Left cardiac atrium (tissue), 4 donors: ENCODE measurements at regions of chr5 and their contacts with region 1.

Region 1: GRCh38 chr5:67149951-67150523 is 46.6 kb downstream of the CD180 start:
- DNase-seq: no peak
- ATAC-seq: no peak

Region 2: DNA sequence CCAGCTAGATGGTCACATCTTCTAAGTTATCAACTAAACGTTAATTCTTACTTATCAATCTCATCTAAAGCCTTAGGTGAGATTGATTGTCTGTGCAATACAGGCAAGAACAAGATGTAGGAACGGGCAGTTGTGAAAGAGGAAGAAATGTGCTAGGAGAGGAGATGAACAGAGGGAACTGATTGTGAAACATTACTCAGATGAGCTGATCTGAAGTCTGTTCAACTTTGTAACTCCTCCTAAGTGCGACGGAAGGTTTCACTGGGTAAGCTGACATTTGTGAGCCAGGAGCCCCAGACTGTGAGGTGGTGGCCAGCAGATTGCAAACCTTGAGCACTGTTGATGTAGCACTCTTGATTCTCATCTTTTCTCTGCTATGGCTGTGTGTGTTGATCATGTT is 157.5 kb before region 1 on chr5:
- intact Hi-C with region 1: loop called in 1 of 2 experiments (anchors 5 kb)
- DNase-seq: no peak
- ATAC-seq: no peak

Region 3: GRCh38 chr5:67196537-67197059 is 46.6 kb after region 1 on chr5 and contains the start of gene CD180:
- intact Hi-C with region 1: no loop called
- DNase-seq: peak; percentile 44
- ATAC-seq: peak; percentile 64 to 76
- total RNA-seq, gene CD180: 0.68 to 1.6 TPM